HCT116 (cell line): ENCODE measurements at regions of chr3 and their contacts with region 1.

Region 1: DNA sequence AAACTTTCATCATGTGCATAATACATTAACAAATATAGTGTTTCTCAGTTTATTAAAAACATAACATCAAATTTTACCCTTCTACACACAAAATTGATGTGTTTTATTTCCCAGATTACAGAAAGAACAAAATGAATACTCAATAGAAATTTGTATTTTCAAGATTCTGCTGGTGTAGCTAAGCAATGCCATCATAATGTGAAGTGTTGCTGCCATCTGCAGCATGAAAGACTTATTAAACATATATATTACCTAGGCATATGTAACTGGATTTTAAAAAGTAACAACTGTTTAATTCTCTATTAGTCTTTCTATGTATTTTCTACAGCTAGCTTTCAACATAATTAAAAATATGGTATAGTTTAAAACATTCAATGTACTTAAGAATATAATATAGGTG is 27.5 kb downstream of the PLSCR5 start:
- DNase-seq: peak; percentile 47
- ATAC-seq: peak; percentile 63; the same call in 1 of the 2 replicates
- H3K4me3 ChIP-seq: no peak overlapping the region
- H3K27ac ChIP-seq: no peak overlapping the region
- H3K4me1 ChIP-seq: no peaks in the 10 kb centered on the region
- H3K27me3 ChIP-seq: no peaks in the 10 kb centered on the region
- CTCF ChIP-seq: peak in 2 of 3 experiments; percentile 61 to 75; a peak in 4 of 6 replicates
- POLR2A ChIP-seq: no peak
- RAD21 ChIP-seq: peak; percentile 88

Region 2: GRCh38 chr3:145649368-145649887 is 928.2 kb before region 1 on chr3:
- CTCF ChIA-PET with region 1: no interaction called
- POLR2A ChIA-PET with region 1: no interaction called
- RAD21 ChIA-PET with region 1: no interaction called
- intact Hi-C with region 1: no loop called
- DNase-seq: no peak
- ATAC-seq: no peak
- H3K4me3 ChIP-seq: no peak overlapping the region
- H3K27ac ChIP-seq: no peak overlapping the region
- H3K4me1 ChIP-seq: no peaks in the 10 kb centered on the region
- H3K27me3 ChIP-seq: no peaks in the 10 kb centered on the region
- CTCF ChIP-seq: no peak
- POLR2A ChIP-seq: no peak
- RAD21 ChIP-seq: no peak

Region 3: DNA sequence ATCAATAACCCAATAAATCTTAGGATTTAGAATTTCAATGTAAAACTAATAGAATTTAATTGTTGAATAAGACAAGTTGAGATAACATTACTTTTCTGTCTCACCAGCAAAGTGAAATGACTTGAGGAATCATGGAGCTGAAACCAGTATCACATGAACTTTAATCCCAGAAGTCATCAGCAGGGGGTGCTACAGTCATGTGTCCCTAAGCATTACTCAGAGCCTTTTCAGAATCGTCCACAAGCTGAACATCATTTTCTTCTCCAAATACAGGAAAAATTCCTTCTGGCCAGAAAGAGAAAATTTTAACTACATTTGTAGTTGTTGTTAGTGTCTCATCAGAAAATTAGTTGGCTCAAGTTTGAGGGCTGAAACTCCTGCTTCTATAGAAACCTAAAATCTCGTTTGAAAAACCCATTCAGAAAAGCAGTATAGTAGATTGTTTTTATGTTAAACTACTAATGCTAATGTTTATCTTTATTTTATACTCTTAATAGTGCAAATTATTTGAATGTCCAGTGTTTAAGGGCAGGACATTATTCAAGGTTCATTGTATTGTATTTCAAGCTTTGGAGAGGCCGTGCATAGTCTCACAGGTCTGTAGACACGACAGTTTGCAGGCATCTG is 800.8 kb before region 1 on chr3:
- CTCF ChIA-PET with region 1: interaction called, 5 read pairs
- POLR2A ChIA-PET with region 1: no interaction called
- RAD21 ChIA-PET with region 1: no interaction called
- intact Hi-C with region 1: loop called (anchors 10 kb)
- DNase-seq: peak; percentile 39
- ATAC-seq: peak; percentile 69; the same call in 1 of the 2 replicates
- H3K4me3 ChIP-seq: no peak overlapping the region
- H3K27ac ChIP-seq: no peak overlapping the region
- H3K4me1 ChIP-seq: no peaks in the 10 kb centered on the region
- H3K27me3 ChIP-seq: no peaks in the 10 kb centered on the region
- CTCF ChIP-seq: peak; percentile 52 to 72 (median 60); a peak in 5 of 6 replicates
- POLR2A ChIP-seq: no peak
- RAD21 ChIP-seq: peak; percentile 71

Region 4: GRCh38 chr3:146065573-146066006 is 512.1 kb before region 1 on chr3:
- CTCF ChIA-PET with region 1: interaction called, 25 read pairs
- POLR2A ChIA-PET with region 1: no interaction called
- RAD21 ChIA-PET with region 1: no interaction called
- intact Hi-C with region 1: loop called (anchors 2 kb)
- DNase-seq: peak; percentile 38
- ATAC-seq: no peak
- H3K4me3 ChIP-seq: no peak overlapping the region
- H3K27ac ChIP-seq: no peak overlapping the region
- H3K4me1 ChIP-seq: no peaks in the 10 kb centered on the region
- H3K27me3 ChIP-seq: no peaks in the 10 kb centered on the region
- CTCF ChIP-seq: peak; percentile 57 to 70 (median 63)
- POLR2A ChIP-seq: no peak
- RAD21 ChIP-seq: peak; percentile 80

Region 5: DNA sequence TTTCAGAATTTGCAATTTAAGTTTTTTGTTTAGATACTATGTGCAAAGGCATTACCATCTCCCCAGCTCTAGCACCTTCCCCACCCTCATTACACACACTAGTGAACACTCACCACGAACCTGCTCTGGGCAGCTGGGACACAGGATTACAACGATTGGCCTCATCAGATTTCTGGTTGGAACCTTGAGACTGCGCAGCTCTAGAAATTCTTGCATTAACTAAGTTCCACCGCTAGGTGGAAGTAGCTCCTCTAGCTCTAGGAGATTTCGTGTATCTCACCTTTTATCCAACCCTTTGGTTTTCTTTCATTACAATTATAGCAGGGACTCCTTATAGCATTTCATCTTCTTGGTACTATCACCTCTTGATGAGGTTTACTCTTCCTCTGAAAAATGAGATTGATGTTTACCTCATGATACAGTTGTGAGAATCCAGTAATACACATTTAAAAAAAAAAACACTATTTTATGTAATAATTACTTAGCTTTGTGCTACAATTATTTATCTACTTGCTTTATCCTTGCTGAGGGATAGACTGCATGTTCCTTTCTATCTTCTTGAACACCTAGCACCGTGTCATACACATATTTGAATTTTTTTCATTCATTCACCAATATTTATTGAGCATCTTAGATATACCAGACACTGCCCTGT is 388.0 kb before region 1 on chr3:
- CTCF ChIA-PET with region 1: interaction called, 63 read pairs
- POLR2A ChIA-PET with region 1: no interaction called
- RAD21 ChIA-PET with region 1: interaction called in 1 of 2 experiments, 6 read pairs
- intact Hi-C with region 1: loop called (anchors 1 kb)
- DNase-seq: peak; percentile 47
- ATAC-seq: peak; percentile 93
- H3K4me3 ChIP-seq: no peak overlapping the region
- H3K27ac ChIP-seq: no peak overlapping the region
- H3K4me1 ChIP-seq: peaks cover 0 to 6% of the 10 kb centered on the region in 2 experiments; a peak in 2 of 4 replicates
- H3K27me3 ChIP-seq: no peaks in the 10 kb centered on the region
- CTCF ChIP-seq: peak; percentile 62 to 73 (median 65); a peak in 5 of 6 replicates
- POLR2A ChIP-seq: no peak
- RAD21 ChIP-seq: peak; percentile 78

Region 6: DNA sequence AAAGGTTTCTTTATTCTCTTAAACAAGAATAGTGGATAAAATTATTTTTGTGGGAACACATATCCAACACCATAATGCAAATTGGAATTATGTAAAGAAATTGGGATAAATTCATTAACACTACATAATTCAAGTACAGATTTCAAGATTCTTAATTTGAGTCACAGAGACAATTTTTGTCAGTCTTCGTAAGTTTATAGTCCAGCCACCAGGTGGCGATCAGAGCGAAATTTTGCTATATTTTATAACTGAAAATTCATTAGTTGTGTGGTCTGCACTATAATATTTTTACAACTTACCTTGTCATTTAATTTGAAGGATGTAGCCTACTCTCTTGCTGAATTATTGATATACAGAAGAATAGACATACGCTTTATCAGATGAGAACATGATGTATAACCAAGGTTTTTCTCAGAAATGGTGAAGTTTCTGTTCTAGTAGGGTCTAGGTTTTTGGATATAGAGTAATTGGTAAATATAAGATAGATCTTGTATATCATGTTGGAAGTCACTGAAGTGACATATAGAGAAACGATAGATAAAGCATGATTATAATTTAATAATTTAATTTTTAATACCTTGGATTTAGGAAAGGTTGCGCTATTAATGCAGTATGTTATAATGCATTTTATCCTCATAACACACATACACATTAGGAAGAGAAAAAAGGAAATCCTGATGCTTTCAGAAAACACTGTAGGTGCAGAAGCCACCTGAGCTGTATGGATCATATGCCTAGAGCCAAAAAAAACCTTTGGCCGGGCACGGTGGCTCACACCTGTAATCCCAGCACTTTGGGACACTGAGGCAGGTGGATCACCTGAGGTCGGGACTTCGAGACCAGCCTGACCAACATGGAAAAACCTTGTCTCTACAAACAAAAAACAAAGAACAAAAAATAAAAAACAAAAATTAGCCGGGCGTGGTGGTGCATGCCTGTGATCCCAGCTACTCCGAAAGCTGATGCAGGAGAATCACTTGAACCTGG is 358.5 kb before region 1 on chr3:
- CTCF ChIA-PET with region 1: interaction called, 6 read pairs
- POLR2A ChIA-PET with region 1: no interaction called
- RAD21 ChIA-PET with region 1: interaction called in 1 of 2 experiments, 6 read pairs
- intact Hi-C with region 1: loop called (anchors 1 kb)
- DNase-seq: no peak
- ATAC-seq: no peak
- H3K4me3 ChIP-seq: no peak overlapping the region
- H3K27ac ChIP-seq: no peak overlapping the region
- H3K4me1 ChIP-seq: peaks cover 5 to 14% of the 10 kb centered on the region in 2 experiments; a peak in 3 of 4 replicates
- H3K27me3 ChIP-seq: no peaks in the 10 kb centered on the region
- CTCF ChIP-seq: peak; percentile 46 to 75 (median 71)
- POLR2A ChIP-seq: no peak
- RAD21 ChIP-seq: peak; percentile 70

Region 7: DNA sequence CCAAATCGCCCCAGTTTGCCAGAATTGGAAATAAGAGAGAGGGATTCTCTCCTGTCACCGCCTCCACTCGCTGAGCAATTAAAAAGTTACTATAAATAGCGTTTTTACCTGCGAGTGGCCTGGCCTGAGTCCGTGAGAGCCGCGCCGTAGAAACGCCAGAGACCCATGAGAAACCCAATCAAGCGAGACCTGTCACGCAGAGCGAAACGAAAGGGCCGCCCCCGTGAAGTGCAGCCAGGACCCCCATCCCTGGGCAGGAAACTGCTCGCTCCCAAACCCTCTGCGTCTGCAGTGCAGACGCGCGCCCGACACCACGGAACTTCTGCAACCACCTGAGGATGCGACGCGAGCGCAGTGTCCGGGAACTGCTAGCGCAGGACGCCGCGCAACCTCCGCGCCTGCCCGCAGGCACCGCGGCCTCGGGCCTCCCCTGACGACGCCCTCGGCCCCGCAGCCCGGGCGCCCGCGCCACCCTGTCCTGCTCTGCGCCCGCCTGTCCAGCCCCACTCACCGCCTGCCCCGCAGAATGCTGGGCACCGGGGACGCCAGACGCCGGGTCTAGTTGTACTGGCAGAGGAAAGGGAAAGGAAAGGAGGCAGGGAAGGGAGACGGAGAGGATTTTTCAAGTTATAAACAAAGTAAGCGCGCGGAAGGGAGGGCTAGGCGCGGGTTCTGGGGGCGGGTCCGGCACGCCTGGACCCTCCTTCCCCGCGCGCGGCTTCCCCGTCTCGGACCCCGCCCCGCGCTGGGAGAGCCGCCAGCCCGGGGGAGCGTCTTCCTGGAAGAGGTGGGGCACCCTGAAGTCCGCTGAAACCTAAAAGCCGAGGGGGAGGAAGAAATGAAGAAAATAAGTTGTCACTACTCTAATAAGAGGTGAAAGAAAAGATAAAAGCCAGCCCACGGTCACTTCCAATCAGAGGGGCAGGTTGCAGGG is 326.9 kb before region 1 on chr3 and contains the start of gene PLSCR4:
- CTCF ChIA-PET with region 1: no interaction called
- POLR2A ChIA-PET with region 1: no interaction called
- RAD21 ChIA-PET with region 1: no interaction called
- intact Hi-C with region 1: no loop called
- DNase-seq: peak; percentile 16
- ATAC-seq: peak; percentile 93
- H3K4me3 ChIP-seq: peak within 1 kb of the TSS; percentile 61 to 80
- H3K27ac ChIP-seq: peak within 1 kb of the TSS; percentile 71
- H3K4me1 ChIP-seq: peaks cover 4% of the 10 kb centered on the region in 2 experiments; a peak in 2 of 4 replicates
- H3K27me3 ChIP-seq: no peaks in the 10 kb centered on the region
- CTCF ChIP-seq: no peak
- POLR2A ChIP-seq: no peak
- RAD21 ChIP-seq: no peak
- total RNA-seq, gene PLSCR4: 4.1 TPM

Region 8: DNA sequence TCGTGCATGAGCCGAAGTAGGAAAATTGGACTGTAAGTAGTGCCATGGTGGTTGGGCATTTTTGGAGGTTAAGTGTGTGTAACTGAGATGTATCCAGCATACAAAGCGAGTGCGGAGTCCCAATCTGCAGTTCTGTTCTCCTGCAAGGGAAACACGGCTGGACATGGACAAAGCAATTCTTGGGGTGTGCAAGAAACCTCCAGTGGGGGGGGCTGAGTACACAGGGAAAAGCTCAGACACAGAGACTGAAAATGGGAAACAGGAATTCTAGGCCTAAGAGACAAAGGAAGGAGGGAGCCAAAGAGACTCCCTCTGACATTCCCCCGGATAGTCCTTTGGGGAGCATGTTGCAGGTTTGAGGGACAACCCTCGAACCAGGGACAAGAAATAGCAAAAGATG is 243.5 kb before region 1 on chr3:
- CTCF ChIA-PET with region 1: interaction called, 7 read pairs
- POLR2A ChIA-PET with region 1: no interaction called
- RAD21 ChIA-PET with region 1: interaction called in 1 of 2 experiments, 3 read pairs
- intact Hi-C with region 1: loop called (anchors 1 kb)
- DNase-seq: no peak
- ATAC-seq: no peak
- H3K4me3 ChIP-seq: no peak overlapping the region
- H3K27ac ChIP-seq: no peak overlapping the region
- H3K4me1 ChIP-seq: no peaks in the 10 kb centered on the region
- H3K27me3 ChIP-seq: no peaks in the 10 kb centered on the region
- CTCF ChIP-seq: peak in 2 of 3 experiments; percentile 14 to 29; a peak in 1 of 6 replicates
- POLR2A ChIP-seq: no peak
- RAD21 ChIP-seq: peak; percentile 65

Region 9: DNA sequence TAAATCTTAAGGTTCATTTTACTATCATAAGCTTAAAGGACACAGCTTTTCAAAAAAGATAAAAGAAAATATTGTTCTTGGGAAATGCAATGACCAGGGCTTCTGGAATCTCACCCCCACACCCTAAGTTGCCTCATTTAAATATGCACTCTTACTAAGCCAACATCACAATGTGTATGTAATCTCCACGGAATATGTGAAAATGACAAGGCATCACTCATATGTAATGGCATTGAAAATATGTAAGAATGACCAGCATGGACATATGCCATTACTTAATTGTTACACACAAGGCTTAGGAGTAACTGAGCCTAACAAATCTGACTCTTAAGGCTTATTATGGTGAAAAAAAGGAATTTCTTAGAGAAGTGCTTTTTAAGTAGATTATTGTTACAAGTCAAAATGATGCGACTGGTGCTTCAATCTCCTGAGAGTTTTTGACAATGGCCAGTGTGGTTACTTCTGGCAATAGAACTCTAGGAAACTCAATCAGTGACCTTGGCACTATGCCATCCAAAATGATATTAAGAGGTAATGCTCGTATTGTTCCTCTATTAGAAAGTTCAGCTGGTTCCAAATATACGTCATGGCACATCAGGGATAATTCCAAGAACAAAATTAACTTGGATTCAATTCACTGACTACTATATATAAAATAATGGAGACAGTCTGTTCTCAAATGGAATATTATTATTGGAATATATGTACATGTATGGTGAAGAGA is 317.5 kb after region 1 on chr3:
- CTCF ChIA-PET with region 1: no interaction called
- POLR2A ChIA-PET with region 1: no interaction called
- RAD21 ChIA-PET with region 1: no interaction called
- intact Hi-C with region 1: no loop called
- DNase-seq: no peak
- ATAC-seq: no peak
- H3K4me3 ChIP-seq: no peak overlapping the region
- H3K27ac ChIP-seq: no peak overlapping the region
- H3K4me1 ChIP-seq: no peaks in the 10 kb centered on the region
- H3K27me3 ChIP-seq: no peaks in the 10 kb centered on the region
- CTCF ChIP-seq: no peak
- POLR2A ChIP-seq: no peak
- RAD21 ChIP-seq: no peak

Region 10: DNA sequence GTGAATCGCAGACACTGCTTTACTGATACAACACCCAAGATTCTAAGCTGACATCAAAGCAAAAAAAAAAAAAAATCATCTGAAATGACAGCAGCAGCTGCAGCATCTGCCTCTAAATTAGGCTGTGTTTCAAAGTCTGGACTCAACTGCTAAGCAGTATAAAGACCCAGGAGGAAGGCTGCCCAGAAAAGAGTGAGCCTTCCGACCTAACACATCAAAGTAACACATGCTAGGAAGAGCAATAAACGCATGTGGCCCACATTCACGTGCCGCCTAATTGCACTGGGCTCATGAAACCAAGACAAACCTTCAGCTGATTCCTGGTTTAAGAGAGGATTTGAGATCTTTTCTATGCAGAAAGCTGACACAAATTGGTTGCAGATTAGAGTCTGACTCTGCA is 511.6 kb after region 1 on chr3:
- CTCF ChIA-PET with region 1: no interaction called
- POLR2A ChIA-PET with region 1: no interaction called
- RAD21 ChIA-PET with region 1: no interaction called
- intact Hi-C with region 1: no loop called
- DNase-seq: no peak
- ATAC-seq: no peak
- H3K4me3 ChIP-seq: no peak overlapping the region
- H3K27ac ChIP-seq: no peak overlapping the region
- H3K4me1 ChIP-seq: no peaks in the 10 kb centered on the region
- H3K27me3 ChIP-seq: no peaks in the 10 kb centered on the region
- CTCF ChIP-seq: no peak
- POLR2A ChIP-seq: no peak
- RAD21 ChIP-seq: no peak